ENCODE measurements at regions of chr1 and their contacts with region 1.

Region 1: DNA sequence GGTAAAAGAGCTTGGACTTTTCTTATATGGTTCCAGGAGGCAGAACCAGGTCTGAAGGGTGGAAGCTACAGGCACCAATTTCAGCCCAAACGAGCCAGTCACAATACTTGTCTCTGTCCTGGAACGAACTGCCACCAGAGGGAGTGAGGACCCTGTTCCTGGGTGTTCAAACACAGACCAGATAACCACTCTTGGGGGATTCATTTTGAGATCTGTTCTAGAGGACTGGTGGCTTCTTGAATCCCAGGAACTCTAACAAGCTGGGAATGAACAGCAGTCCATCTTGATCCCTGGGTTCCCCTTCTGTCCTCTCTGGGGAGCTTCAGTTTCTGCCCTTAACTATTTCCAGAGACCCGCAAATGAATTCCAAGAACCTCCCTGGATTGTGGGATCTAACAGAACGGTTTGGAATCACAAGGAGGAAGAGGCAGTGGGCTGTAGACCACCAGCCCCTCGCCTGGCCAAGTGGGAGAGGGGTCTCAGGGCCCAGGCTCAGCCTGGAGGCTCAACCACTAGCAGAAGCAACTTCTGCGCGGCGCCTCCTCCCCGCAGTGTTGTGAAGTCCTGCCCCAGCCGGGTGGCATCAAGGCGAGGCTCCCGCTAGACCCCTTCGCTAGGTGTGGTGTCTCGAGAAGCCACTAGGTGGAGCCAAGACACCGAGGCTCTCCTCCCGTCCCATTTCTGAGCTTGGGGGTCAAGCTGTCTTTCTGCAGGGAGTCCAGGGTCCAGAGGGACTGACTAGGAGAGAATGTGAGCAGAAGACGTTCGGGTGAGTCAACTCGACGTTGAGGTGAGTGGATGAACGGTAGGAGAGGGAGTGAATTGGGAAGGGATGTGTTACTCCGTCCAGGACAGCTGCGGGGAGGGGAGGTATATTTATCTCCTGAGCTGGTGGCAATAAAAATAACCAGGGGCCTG is 12.1 kb upstream of the NES start:
- DNase-seq: peak; percentile 72
- H3K4me3 ChIP-seq: no peak overlapping the region
- H3K27ac ChIP-seq: no peak overlapping the region
- H3K4me1 ChIP-seq: peaks cover 7% of the 10 kb centered on the region
- H3K27me3 ChIP-seq: no peaks in the 10 kb centered on the region
- CTCF ChIP-seq: peak; percentile 86

Region 2: DNA sequence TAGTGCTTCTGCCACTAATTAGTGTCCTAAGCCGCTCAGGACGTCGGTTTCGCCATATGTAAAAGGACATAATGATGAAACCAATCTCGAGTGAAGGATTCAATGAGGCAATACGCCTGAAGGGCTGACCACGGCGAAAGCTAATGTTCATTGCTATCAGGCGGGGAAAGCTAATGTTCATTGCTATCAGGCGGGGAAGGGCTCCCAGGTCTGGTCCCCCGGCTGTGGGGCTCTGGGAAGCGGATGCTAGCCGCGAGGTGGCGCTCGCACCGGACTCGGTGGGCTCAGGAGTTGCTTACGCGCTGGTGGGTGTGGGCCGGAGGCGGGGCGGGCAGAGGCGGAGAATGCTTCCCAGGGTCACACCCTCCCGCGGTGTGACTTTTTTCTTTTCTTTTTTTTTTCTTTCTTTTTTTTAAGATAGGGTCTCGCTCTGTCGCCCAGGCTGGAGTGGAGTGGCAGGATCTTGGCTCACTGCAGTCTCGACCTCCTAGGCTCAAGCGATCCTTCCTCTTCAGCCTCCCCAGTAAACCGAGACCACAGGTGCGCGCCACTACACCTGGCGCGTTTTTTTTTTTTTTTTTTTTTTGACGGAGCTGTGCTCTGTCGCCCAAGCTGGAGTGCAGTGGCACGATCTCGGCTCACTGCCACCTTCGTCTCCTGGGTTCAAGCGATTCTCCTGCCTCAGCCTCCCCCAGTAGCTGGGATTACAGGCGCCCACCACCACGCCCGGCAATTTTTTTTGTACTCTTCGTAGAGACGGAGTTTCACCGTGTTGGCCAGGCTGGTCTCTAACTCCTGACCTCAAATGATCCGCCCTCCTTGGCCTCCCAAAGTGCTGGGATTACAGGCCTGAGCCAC is 203.1 kb after region 1 on chr1:
- intact Hi-C with region 1: loop called (anchors 10 kb)
- DNase-seq: peak; percentile 94
- H3K4me3 ChIP-seq: no peak overlapping the region
- H3K27ac ChIP-seq: no peak overlapping the region
- H3K4me1 ChIP-seq: no peaks in the 10 kb centered on the region
- H3K27me3 ChIP-seq: peaks cover 16% of the 10 kb centered on the region
- CTCF ChIP-seq: peak; percentile 83

Measured in colonic mucosa (tissue), 4 donors.